ENCODE measurements at regions of chr1 and their contacts with region 1.

Region 1: DNA sequence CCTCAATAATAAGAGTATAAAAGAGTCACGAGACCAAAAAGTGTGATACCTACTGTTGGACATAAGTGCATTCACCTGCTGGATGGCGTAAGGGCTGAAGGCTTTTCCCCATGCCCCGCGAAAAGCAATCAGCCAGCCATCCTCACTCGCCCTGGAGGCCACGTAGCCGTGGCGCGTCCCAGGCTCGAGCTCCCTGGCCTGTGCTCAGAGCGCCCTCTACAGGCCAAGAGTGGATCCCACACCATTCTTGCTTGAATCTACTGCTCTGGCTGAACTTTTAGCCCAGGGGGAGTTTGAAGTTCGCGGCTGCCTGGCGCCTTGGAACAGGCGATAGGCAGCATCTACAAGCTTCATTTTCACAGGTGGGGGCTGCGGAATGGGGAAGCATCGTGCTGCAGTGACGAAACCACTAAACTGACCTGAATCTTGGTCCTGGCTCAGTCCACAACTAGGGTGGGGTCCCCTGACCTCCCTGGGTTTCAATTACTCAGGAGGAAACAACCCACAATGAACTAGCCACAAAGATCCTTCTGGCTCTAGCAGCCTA is 70.3 kb upstream of the SERBP1 start:
- H3K4me3 ChIP-seq: no peak overlapping the region
- H3K27ac ChIP-seq: no peak overlapping the region
- H3K4me1 ChIP-seq: no peaks in the 10 kb centered on the region
- CTCF ChIP-seq: peak; percentile 99

Region 2: DNA sequence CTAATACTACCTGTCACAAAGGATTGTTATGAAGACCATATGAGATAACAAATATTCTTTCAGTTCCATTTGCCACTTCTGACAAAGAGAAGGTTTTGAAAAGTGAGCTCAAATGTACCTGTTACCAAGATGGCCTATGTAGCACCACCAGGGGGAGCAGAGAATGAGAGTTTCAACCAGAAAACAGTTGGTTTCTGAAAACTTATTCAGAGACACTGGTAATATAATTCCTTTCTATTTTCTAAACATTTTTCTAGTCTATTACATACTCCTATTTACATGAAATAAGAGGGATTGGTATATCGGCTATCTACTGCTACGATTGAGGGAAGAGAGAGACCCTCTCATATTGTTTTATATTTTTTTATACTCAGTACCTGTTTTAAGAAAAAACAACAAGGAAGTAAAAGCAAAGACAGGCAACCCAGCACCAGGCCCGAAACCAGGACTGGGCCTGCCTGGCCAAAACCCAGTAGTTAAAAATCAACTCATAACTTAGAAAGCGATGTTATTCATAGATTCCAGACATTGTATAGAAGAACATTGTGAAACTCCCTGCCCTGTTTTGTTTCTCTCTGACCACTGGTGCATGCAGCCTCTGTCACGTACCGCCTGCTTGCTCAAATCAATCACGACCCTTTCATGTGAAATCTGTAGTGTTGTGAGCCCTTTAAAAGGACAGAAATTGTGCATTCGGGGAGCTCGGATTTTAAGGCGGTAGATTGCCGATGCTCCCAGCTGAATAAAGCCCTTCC is 285.9 kb before region 1 on chr1:
- CTCF ChIA-PET with region 1: interaction called, 65 read pairs
- POLR2A ChIA-PET with region 1: no interaction called
- H3K4me3 ChIP-seq: no peak overlapping the region
- H3K27ac ChIP-seq: no peak overlapping the region
- H3K4me1 ChIP-seq: no peaks in the 10 kb centered on the region
- CTCF ChIP-seq: no peak

Region 3: DNA sequence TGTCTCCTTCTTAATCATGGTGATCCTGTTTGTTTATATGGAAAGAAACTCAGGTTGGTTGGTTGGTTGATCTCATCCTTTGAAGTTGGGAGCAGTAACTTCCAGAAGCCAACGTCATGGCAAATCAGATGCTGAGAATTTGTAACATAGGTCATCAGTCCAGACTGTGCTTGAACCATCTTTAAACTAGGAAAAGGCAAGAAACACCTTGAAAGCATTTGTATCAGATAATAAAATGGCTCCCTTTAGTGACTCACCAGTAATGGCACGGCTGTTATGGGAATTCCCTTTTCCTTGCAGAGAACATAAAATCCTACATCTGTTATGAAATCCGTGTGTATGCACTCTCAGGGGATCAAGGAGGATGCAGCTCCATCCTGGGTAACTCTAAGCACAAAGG is 128.3 kb before region 1 on chr1:
- CTCF ChIA-PET with region 1: interaction called, 10 read pairs
- POLR2A ChIA-PET with region 1: no interaction called
- H3K4me3 ChIP-seq: no peak overlapping the region
- H3K27ac ChIP-seq: no peak overlapping the region
- H3K4me1 ChIP-seq: peaks cover 4% of the 10 kb centered on the region; the same call in 1 of the 2 replicates
- CTCF ChIP-seq: no peak

Region 4: DNA sequence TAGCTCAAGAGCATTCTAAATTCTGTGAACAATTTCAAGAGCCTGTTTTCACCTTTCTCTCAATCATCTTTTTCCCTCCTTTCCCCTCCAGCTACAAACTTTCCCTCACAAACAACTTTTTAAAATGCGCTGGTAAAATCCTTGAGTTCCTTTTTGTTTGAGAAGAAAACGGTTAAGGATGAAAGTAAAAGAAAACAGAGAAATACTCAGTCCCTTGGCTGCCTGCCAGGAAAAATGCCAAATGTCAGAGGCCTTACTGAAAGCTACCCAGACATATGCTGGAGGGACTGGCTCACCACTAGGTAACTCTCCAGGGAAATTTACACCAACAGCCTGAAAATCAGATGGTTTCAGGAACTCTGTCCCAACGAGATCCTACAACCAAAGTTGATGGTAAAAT is 59.3 kb before region 1 on chr1:
- CTCF ChIA-PET with region 1: interaction called, 10 read pairs
- POLR2A ChIA-PET with region 1: no interaction called
- H3K4me3 ChIP-seq: no peak overlapping the region
- H3K27ac ChIP-seq: 0 out of 2 replicates have a peak overlapping the region, but pooled peaks have one; percentile 18
- H3K4me1 ChIP-seq: peaks cover 12% of the 10 kb centered on the region
- CTCF ChIP-seq: no peak

Region 5: DNA sequence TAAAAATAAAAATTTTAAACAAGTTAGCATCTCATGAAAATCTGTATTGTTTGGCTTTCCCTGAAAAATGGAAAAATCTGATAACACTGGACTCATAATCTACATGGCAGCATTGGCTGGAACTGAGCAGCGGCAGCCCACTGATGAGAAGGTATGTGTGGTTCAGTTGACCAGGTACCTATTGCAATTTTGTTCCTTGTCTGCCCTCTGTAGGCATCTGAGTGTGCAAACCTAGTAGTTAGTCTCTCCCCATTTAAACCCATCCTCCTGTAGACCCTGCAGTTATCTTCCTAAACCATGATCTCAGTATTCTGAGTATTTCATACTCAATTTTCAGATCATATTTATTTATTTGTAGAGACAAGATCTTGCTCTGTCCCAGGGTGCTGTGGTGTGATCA is 10.8 kb before region 1 on chr1:
- CTCF ChIA-PET with region 1: interaction called, 24 read pairs
- POLR2A ChIA-PET with region 1: interaction called, 4 read pairs
- H3K4me3 ChIP-seq: no peak overlapping the region
- H3K27ac ChIP-seq: no peak overlapping the region
- H3K4me1 ChIP-seq: no peaks in the 10 kb centered on the region
- CTCF ChIP-seq: no peak

Region 6: DNA sequence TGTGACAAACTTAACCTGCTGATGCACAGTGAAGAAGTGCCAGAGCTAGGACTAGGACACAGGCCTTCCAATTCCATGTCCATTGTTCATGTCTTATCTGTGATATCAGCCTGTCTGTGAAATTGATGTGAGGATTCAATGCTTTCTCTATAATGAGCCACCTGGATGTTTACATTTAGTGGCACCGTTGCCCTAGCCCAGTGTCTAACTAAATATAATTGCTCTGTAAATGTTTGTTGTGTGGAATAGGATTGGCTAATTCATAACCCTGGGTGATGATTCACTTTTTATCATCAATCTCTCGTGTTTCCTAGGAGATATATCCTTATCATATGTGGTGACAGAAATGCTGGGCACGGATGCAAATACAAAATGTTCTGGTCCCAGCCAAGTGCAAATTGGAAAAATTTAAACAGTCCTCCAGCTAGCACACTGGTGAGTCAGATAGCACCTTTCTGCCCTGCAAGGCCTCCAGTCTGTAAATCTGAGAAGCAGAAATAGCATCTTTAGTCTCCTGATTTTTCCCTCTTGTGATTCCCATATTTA is 379.6 kb after region 1 on chr1:
- CTCF ChIA-PET with region 1: no interaction called
- POLR2A ChIA-PET with region 1: no interaction called
- H3K4me3 ChIP-seq: no peak overlapping the region
- H3K27ac ChIP-seq: no peak overlapping the region
- H3K4me1 ChIP-seq: no peaks in the 10 kb centered on the region; the same call in 1 of the 2 replicates
- CTCF ChIP-seq: no peak